PC-9 (cell line): ENCODE measurements at regions of chr17 and their contacts with region 1.

Region 1: GRCh38 chr17:60473788-60474187 is 51.5 kb downstream of the CHCT1 start:
- DNase-seq: no peak
- H3K4me3 ChIP-seq: no peak overlapping the region
- H3K27ac ChIP-seq: no peak overlapping the region; the same call in 1 of the 2 replicates
- H3K4me1 ChIP-seq: peaks cover 11% of the 10 kb centered on the region
- H3K27me3 ChIP-seq: no peaks in the 10 kb centered on the region
- CTCF ChIP-seq: no peak

Region 2: DNA sequence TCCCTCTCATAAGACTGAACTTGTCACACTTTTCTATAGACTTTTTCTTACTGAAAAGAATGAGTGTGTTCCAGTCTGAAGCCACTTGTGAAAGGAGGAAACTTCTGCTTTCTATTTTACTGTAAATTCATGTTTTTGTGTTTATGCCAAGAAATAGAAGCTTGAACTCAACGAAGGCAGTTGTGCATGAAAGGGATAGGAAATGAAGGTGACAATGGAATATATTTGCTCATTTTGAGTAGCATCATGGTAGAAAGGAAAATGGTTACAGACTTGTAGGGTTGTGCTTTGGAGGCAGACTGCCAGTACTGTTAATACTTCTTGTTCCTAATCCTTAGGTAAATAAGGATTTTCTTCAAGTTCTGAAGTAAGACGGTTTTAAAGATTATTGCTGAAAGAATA is 846.0 kb before region 1 on chr17:
- CTCF ChIA-PET with region 1: no interaction called
- POLR2A ChIA-PET with region 1: interaction called, 11 read pairs
- intact Hi-C with region 1: no loop called
- DNase-seq: no peak
- H3K4me3 ChIP-seq: no peak overlapping the region
- H3K27ac ChIP-seq: no peak overlapping the region
- H3K4me1 ChIP-seq: peaks cover 19% of the 10 kb centered on the region
- H3K27me3 ChIP-seq: no peaks in the 10 kb centered on the region
- CTCF ChIP-seq: no peak

Region 3: GRCh38 chr17:60421273-60421934 is 52.4 kb before region 1 on chr17:
- CTCF ChIA-PET with region 1: no interaction called
- POLR2A ChIA-PET with region 1: no interaction called
- intact Hi-C with region 1: no loop called
- DNase-seq: peak in 1 of 2 experiments; percentile 52
- H3K4me3 ChIP-seq: peak overlapping the region; percentile 30; the same call in 1 of the 2 replicates
- H3K27ac ChIP-seq: no peak overlapping the region
- H3K4me1 ChIP-seq: no peaks in the 10 kb centered on the region; the same call in 1 of the 2 replicates
- H3K27me3 ChIP-seq: no peaks in the 10 kb centered on the region
- CTCF ChIP-seq: peak; percentile 64